SK-N-SH (cell line): ENCODE measurements at regions of chr11 and their contacts with region 1.

Region 1: GRCh38 chr11:47186076-47186936 is at the start of gene PACSIN3:
- DNase-seq: peak; percentile 92
- H3K4me3 ChIP-seq: peak within 1 kb of the TSS; percentile 64 to 69
- H3K27ac ChIP-seq: peak within 1 kb of the TSS in 1 of 2 experiments; percentile 94; a peak in 2 of 4 replicates
- H3K4me1 ChIP-seq: peaks cover 11 to 33% of the 10 kb centered on the region in 2 experiments; a peak in 3 of 4 replicates
- H3K27me3 ChIP-seq: no peaks in the 10 kb centered on the region
- CTCF ChIP-seq: no peak
- EP300 ChIP-seq: no peak
- RAD21 ChIP-seq: no peak
- polyA plus RNA-seq, gene PACSIN3: 24.4 and 31.1 TPM in 2 replicates

Region 2: DNA sequence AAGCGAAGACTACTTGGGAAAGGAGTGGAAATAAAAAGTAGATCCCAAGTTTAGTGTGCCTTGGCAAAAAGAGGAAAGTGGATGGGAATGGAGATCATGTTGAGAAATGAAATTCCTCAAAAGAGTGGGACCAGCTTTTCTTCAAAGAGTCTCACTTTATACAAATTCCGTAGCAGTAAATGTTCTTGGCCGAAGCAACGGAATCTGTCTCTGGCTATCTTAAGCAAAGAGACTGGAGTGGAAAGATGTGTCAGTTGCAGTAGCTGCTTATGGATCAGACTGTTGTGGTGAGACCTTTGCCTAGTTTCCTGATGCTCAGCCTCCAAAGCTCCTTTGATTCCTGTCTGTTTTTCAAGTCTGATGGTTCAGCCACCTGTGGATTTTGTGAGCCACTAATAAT is 176.1 kb before region 1 on chr11:
- CTCF ChIA-PET with region 1: no interaction called
- POLR2A ChIA-PET with region 1: no interaction called
- DNase-seq: no peak
- H3K4me3 ChIP-seq: no peak overlapping the region
- H3K27ac ChIP-seq: no peak overlapping the region
- H3K4me1 ChIP-seq: peaks cover 11 to 24% of the 10 kb centered on the region in 2 experiments; a peak in 3 of 4 replicates
- H3K27me3 ChIP-seq: no peaks in the 10 kb centered on the region
- CTCF ChIP-seq: no peak
- EP300 ChIP-seq: no peak
- RAD21 ChIP-seq: no peak

Region 3: DNA sequence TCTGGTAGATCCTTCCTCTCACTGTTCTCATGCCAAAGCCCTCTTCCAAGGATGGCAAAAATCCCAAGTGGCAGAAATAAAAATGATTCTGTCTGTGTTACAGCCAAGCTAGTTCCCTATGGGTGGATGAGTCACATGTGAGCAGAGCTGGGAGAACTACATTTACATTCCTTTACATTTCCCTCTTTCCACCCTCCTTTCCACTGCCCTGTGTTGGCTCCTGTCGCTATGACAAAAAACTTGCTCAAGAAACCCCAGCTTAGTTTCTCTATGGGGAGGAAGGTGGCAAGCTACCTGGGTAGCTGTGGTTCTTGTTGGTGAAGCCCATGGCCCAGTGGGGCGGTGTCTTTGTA is 18.3 kb after region 1 on chr11:
- CTCF ChIA-PET with region 1: interaction called, 13 read pairs
- POLR2A ChIA-PET with region 1: interaction called, 3 read pairs
- DNase-seq: no peak
- H3K4me3 ChIP-seq: no peak overlapping the region
- H3K27ac ChIP-seq: peak overlapping the region in 1 of 2 experiments; percentile 79; a peak in 2 of 4 replicates
- H3K4me1 ChIP-seq: peaks cover 0 to 4% of the 10 kb centered on the region in 2 experiments; a peak in 2 of 4 replicates
- H3K27me3 ChIP-seq: no peaks in the 10 kb centered on the region
- CTCF ChIP-seq: no peak
- EP300 ChIP-seq: no peak
- RAD21 ChIP-seq: no peak

Region 4: DNA sequence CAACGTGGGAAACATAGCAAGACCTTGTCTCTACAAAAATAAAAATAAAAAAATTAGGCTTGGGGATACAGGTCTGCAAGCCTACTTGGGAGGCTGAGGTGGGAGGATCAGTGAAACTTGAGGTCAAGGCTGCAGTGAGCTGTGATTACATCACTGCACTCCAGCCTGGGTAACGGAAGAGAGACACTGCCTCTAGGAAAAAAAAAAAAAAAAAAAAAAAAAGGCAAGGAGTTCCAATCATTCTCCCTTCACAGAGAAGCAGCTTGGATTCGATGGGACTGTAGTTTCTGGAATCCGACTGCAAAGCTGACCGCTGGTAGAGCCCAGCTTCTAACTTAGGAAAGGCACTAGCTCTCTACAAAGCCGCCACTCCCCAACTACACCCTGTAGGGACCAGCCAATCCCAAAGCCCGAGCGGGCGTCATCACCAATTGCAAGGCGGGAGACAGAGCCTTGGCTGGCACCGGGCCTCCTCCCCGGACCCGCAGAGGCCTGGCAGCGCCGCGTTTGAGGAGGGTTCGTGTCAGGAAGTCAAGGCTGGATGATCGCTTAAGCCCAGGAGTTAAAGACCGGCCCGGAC is 27.8 kb after region 1 on chr11:
- CTCF ChIA-PET with region 1: interaction called, 15 read pairs
- POLR2A ChIA-PET with region 1: interaction called, 69 read pairs
- DNase-seq: peak; percentile 88
- H3K4me3 ChIP-seq: peak overlapping the region; percentile 61 to 79
- H3K27ac ChIP-seq: peak overlapping the region; percentile 87 to 90
- H3K4me1 ChIP-seq: peaks cover 16 to 20% of the 10 kb centered on the region in 2 experiments; a peak in 2 of 4 replicates
- H3K27me3 ChIP-seq: no peaks in the 10 kb centered on the region
- CTCF ChIP-seq: no peak
- EP300 ChIP-seq: no peak
- RAD21 ChIP-seq: no peak

Region 5: DNA sequence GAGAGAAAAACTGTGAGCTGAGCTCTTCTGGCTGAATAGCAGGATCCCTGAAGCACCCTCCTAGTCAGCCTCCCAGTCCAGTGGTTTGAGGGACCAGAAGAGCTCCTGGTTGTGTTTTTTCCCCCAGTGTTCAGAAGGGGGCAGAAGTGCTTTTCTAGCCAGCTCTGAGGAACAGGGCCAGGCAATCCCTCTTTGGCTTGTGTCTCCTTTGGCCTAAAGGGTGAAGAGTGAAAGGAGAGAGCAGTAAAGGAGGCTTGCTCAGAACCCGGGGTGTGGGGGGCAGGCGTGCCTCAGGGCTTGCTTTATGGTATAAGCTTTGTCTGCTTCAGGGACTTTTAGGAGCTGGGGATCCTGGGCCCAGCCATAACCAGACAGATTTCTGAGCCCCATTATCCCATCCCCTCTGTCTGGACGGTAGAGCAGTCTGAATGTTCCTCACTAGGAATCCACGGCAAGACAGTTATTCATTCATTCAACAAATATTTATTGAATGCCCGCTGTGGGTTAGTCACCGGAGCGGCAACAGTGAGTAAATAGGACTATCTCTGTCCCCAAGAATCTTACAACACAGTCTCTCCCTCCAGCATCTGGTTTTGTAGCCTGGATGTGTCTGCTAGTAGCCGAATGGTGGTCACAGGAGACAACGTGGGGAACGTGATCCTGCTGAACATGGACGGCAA is 47.8 kb after region 1 on chr11:
- CTCF ChIA-PET with region 1: interaction called, 4 read pairs
- POLR2A ChIA-PET with region 1: interaction called, 12 read pairs
- DNase-seq: peak; percentile 31
- H3K4me3 ChIP-seq: no peak overlapping the region
- H3K27ac ChIP-seq: peak overlapping the region in 1 of 2 experiments; percentile 20; a peak in 1 of 4 replicates
- H3K4me1 ChIP-seq: peaks cover 2 to 14% of the 10 kb centered on the region in 2 experiments; a peak in 2 of 4 replicates
- H3K27me3 ChIP-seq: no peaks in the 10 kb centered on the region
- CTCF ChIP-seq: peak; percentile 38
- EP300 ChIP-seq: no peak
- RAD21 ChIP-seq: peak; percentile 51

Region 6: GRCh38 chr11:47248664-47249377 is 62.5 kb after region 1 on chr11 and contains the start of gene ACP2:
- CTCF ChIA-PET with region 1: interaction called, 26 read pairs
- POLR2A ChIA-PET with region 1: interaction called, 48 read pairs
- DNase-seq: peak; percentile 89
- H3K4me3 ChIP-seq: peak within 1 kb of the TSS; percentile 75 to 92
- H3K27ac ChIP-seq: peak within 1 kb of the TSS; percentile 63 to 96
- H3K4me1 ChIP-seq: peaks cover 8 to 15% of the 10 kb centered on the region in 2 experiments
- H3K27me3 ChIP-seq: no peaks in the 10 kb centered on the region
- CTCF ChIP-seq: peak; percentile 49
- EP300 ChIP-seq: no peak
- RAD21 ChIP-seq: peak; percentile 10; the same call in 1 of the 2 replicates
- polyA plus RNA-seq, gene ACP2: 15.9 and 17.5 TPM in 2 replicates

Region 7: GRCh38 chr11:47259178-47259977 is 73.1 kb after region 1 on chr11:
- CTCF ChIA-PET with region 1: interaction called, 16 read pairs
- POLR2A ChIA-PET with region 1: interaction called, 11 read pairs
- DNase-seq: peak; percentile 74
- H3K4me3 ChIP-seq: no peak overlapping the region
- H3K27ac ChIP-seq: no peak overlapping the region
- H3K4me1 ChIP-seq: peaks cover 17 to 20% of the 10 kb centered on the region in 2 experiments; a peak in 3 of 4 replicates
- H3K27me3 ChIP-seq: no peaks in the 10 kb centered on the region
- CTCF ChIP-seq: peak; percentile 58
- EP300 ChIP-seq: no peak
- RAD21 ChIP-seq: peak; percentile 73

Region 8: DNA sequence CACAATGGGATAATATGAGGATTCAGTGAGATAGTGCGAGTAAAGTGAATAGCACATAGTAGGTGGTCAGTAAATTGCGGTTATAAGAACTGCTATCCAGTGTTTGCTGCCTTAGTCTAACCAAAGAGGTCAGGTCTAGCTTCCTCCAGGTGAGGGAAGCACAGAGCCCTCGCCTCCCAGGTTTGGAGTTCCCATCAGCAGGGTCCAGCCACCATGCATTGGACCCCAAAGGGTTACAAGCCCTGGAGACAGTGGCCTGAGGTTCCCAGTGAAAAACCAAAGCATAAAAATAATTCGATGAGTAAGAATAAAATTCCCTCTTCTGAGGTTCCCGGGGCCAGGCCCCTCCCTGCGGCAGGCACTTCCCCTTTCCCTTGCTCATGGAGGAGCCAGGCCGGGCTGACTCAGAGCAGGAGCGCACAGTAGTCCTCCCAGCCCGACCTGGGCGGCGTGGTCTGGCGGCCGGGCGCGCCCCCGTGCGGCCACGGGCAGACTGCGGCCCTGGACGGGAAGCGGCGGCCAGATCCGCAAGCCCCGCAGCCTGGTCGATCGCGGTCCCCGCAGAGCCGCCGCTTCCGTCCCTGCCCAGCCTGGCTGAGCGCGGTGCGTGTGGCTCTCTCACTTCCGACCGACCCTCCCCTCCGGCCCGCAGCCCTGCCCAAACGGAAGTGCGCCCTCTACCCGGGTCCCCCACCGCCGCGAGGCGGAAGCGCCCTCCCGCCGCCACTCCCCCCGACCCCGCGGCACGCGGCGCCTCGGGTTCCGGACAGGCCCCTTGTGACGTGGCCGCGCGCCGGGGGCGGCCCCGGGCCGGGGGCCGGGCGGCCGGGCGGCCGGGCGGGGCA is 221.7 kb after region 1 on chr11 and contains the start of gene SLC39A13:
- CTCF ChIA-PET with region 1: interaction called, 13 read pairs
- POLR2A ChIA-PET with region 1: interaction called, 7 read pairs
- DNase-seq: peak; percentile 99
- H3K4me3 ChIP-seq: peak within 1 kb of the TSS; percentile 64 to 99
- H3K27ac ChIP-seq: peak within 1 kb of the TSS; percentile 95 to 97
- H3K4me1 ChIP-seq: peaks cover 21 to 40% of the 10 kb centered on the region in 2 experiments; a peak in 2 of 4 replicates
- H3K27me3 ChIP-seq: no peaks in the 10 kb centered on the region
- CTCF ChIP-seq: peak; percentile 80
- EP300 ChIP-seq: peak; percentile 44 to 48; a peak in 2 of 4 replicates
- RAD21 ChIP-seq: peak; percentile 78
- polyA plus RNA-seq, gene SLC39A13: 65.5 and 70.7 TPM in 2 replicates